ENCODE measurements at regions of chr20 and their contacts with region 1.

Region 1: GRCh38 chr20:53750827-53751619 is 157.4 kb upstream of the ZNF217 start:
- DNase-seq: peak; percentile 58
- ATAC-seq: peak; percentile 66
- H3K4me3 Mint-ChIP-seq: peak overlapping the region; percentile 68
- H3K27ac Mint-ChIP-seq: peak overlapping the region; percentile 97
- H3K4me1 Mint-ChIP-seq: peaks cover 61% of the 10 kb centered on the region
- H3K27me3 Mint-ChIP-seq: no peaks in the 10 kb centered on the region

Region 2: DNA sequence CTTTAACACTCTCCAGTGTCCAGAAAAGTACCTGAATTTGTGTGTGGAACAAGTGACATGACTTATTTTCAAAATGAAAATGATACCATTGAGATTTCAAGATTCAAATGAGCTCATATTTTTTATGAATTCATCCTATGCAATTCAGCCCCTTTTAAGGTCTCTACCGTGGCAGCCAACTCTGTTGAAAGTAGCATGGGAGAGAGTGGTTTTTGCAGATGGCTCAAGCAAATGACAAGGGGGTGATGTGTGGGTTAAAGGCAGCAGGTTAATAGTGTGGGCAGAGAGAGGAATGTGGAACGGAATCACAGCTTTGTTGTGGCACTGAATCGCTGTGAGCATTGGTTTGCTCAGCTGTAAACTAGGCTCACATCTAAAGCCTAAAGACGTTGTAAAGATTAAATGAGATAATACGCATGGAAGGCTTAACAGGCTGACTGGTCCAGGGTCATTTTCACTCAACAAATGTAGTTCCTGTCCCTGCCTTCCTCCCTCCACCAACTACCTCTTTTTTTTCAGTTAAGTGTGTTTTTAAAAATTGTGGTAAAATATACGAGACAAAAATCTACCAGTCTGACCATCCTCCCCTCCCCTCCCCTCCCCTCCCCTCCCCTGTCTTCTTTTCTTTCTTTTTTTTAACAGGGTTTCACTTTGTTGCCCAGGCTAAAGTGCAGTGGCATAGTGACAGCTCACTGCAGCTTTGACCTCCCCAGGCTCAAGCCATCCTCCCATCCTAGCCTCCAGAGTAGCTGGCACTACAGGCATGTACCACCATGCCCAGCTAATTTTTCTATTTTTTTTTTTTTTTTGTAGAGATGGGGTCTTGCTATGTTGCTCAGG is 42.7 kb before region 1 on chr20:
- POLR2A ChIA-PET with region 1: interaction called, 53 read pairs
- DNase-seq: no peak
- ATAC-seq: peak; percentile 60
- H3K4me3 Mint-ChIP-seq: peak overlapping the region; percentile 82
- H3K27ac Mint-ChIP-seq: peak overlapping the region; percentile 94
- H3K4me1 Mint-ChIP-seq: peaks cover 50% of the 10 kb centered on the region
- H3K27me3 Mint-ChIP-seq: no peaks in the 10 kb centered on the region

Region 3: DNA sequence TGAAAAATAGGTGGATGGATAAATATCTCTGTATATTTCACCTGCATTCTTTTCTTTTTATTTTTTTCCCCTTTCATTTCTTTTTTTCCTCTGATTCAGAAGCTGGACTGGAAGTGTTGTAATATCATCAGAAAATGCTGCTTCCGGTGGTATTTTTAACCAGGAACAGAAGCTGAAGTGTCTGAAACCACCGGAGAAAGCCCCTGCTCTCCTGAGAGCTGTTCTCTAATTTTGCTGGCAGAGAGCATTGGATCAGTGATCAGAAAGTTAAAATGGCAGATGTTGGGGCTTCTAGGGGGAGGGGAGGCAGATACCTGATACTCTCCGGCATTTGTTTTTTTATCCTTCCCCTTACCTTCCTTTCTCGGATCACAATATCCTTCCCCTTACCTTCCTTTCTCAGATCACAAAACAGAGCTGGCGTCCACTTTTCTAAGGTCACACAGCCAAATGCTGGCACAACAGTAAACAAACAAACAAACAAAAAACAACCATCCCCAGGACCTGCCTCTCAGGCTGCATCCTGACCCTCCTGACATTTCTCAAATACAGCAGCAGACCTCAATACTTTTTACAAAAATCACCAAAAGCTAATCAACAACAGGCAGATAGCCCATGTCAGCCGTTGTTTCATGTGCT is 14.1 kb before region 1 on chr20:
- POLR2A ChIA-PET with region 1: interaction called, 12 read pairs
- DNase-seq: no peak
- ATAC-seq: peak; percentile 46
- H3K4me3 Mint-ChIP-seq: peak overlapping the region; percentile 78
- H3K27ac Mint-ChIP-seq: peak overlapping the region; percentile 91
- H3K4me1 Mint-ChIP-seq: peaks cover 51% of the 10 kb centered on the region
- H3K27me3 Mint-ChIP-seq: no peaks in the 10 kb centered on the region

Region 4: DNA sequence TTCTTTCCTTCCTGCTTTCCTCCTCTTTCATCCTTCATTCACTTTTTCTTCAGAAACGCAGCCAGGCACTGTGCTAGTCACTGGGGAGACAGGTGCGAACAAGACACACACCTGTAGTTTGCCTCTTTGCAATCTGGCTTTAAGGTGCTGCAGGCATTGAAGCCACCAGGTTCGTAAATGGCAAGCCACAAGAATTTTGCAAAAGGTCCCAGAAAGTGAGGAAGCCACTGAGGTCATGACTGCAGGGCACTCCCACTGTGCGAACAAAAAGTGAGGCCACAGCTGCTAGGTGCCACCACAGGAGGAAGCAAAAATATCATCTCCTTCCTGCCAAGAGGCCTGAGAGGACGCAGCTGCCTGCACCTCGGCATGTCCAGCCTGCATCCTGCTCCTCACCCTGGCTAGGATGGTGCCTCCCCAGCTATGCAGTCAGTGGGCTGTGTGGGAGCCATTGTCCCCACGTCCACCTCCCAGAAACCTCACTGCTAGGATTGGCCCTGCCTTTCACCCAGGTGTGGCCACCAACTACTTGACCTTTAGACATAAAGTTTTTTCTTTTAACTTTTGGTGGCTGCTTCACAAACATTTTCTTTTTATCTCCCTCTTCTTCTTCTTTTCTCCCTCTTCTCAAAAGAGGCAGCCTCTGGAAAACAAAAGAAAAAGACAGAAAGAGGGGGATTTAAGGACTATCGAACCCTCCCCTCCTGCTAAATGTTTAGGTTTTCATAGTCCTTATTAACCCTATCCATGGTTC is 88.6 kb after region 1 on chr20:
- POLR2A ChIA-PET with region 1: interaction called, 10 read pairs
- DNase-seq: peak; percentile 70
- ATAC-seq: peak; percentile 71
- H3K4me3 Mint-ChIP-seq: peak overlapping the region; percentile 87
- H3K27ac Mint-ChIP-seq: peak overlapping the region; percentile 97
- H3K4me1 Mint-ChIP-seq: peaks cover 62% of the 10 kb centered on the region
- H3K27me3 Mint-ChIP-seq: no peaks in the 10 kb centered on the region

Region 5: DNA sequence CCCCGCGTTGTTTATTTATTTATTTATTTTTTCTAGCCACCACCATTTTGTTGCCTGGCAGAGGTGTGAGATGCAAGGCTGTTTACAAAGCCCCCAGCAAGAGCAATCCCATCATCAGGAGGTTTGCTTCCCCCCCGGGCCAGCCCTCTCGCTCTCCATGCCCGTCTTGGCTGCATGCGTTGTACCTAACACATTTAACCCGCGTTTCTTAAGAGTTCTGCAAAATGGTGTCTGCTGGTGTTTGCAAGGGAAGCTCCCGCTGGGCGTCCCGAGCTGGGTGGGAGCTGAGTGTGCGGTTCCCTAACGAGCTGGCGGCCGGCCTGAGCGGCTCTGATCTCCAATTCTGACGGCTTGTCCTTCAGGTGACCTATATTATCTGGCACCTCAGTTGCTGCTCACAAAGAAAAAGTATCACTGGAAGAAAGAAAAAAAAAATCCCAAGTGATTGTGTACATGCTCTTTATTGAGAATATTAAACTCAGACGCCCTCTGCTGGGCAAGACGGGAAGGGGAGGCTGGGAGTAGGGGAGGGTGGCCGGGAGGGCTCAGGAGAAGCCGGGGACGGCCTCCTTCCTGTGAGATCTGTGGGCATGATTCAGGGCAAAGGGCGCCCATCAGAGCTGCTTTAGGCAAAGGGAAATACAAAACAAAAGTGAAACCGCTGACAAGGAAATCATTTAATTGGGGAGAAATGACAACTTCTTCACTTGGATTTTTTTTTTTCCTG is 164.6 kb after region 1 on chr20:
- POLR2A ChIA-PET with region 1: interaction called, 11 read pairs
- DNase-seq: peak; percentile 92
- ATAC-seq: peak; percentile 99
- H3K4me3 Mint-ChIP-seq: peak overlapping the region; percentile 86
- H3K27ac Mint-ChIP-seq: peak overlapping the region; percentile 85
- H3K4me1 Mint-ChIP-seq: peaks cover 32% of the 10 kb centered on the region
- H3K27me3 Mint-ChIP-seq: no peaks in the 10 kb centered on the region

Measured in activated naive CD8-positive, alpha-beta T cell treated with anti-CD3 and anti-CD28 coated beads, Interleukin-2, amount 10 ng/mL, durations not matched to agents 7 days and 5 days (primary cell).